Ovary (tissue), 10 donors: ENCODE measurements at regions of chr14 and their contacts with region 1.

Region 1: DNA sequence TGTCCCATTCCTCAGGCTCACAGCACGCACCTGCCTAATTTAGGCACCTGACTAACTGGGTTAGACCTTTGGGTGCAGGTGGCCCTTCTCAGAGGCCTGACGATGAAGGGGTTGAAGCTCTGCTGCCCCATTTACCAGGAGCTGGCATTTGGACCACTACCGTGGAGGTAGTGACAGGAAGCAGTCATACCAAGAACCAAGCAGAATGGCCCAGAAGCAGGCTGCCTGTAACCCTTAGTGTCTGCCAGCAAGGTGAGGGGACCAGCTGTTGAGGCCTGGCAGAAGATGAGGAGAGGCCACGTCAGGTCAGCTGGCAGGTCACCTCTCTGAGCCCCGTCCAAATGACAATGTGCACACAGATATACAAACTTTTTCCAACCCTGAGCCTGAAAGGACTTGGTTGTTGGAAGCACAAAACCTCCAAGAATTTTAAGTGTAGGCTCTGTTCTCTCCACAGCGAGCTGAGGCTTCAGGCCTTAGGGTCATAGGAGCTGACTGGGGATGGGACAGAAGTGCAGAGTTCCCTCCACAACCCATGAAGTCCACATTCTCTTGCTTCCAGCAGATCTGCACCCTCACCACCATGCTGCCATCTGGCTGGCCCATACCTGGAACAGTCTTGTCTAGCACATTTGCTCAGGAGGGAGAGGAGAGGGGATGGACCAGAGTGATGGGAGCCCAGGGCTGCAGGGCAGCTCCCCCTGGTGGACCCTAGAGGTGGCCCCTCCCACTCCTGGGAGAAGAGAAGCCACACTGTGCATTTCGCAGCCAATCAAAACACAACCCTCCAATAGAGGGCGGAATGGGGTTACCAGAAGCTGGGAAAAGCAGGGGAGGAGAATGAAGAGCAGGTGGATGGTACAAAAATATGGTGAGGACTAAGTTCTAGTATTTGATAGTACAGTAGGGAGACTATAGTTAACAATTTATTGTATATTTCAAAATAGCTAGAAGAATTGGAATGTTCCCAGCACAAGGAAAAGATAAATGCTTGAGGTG is 23.3 kb downstream of the VASH1 start:
- DNase-seq: peak; percentile 69 to 85 (median 79)
- H3K4me3 ChIP-seq: no peak overlapping the region
- H3K27ac ChIP-seq: no peak overlapping the region
- H3K4me1 ChIP-seq: peaks cover 8% of the 10 kb centered on the region
- H3K27me3 ChIP-seq: no peaks in the 10 kb centered on the region
- CTCF ChIP-seq: peak; percentile 21 to 79 (median 74)
- EP300 ChIP-seq: no peak
- POLR2A ChIP-seq: no peak

Region 2: DNA sequence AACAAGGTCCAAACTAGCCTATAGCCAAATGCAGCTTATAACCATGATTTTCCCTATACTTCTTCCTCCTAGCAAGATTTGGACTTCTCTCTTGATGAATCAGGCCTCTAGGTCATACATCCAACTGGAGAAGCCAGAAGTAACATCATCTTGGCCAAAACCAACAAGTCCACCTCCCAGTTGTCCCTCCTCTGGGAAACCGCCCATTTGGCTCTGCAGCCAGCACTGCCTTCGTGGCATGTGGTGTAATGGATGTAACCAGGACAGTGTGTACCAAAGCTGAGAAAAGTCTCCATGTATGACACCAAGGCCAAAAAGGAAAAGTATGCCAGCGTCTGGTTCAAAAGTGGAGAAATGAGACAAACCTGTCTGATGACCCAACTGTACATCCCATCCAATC is 82.6 kb before region 1 on chr14:
- intact Hi-C with region 1: loop called in 1 of 4 experiments (anchors 10 kb)
- DNase-seq: no peak
- H3K4me3 ChIP-seq: no peak overlapping the region
- H3K27ac ChIP-seq: no peak overlapping the region
- H3K4me1 ChIP-seq: peaks cover 6% of the 10 kb centered on the region
- H3K27me3 ChIP-seq: no peaks in the 10 kb centered on the region
- CTCF ChIP-seq: no peak
- EP300 ChIP-seq: no peak
- POLR2A ChIP-seq: no peak

Region 3: GRCh38 chr14:76710056-76711010 is 74.2 kb before region 1 on chr14:
- intact Hi-C with region 1: loop called in 3 of 4 experiments (anchors 1 to 10 kb)
- DNase-seq: peak in 1 of 5 donors; percentile 39
- H3K4me3 ChIP-seq: no peak overlapping the region
- H3K27ac ChIP-seq: no peak overlapping the region
- H3K4me1 ChIP-seq: peaks cover 1% of the 10 kb centered on the region
- H3K27me3 ChIP-seq: no peaks in the 10 kb centered on the region
- CTCF ChIP-seq: peak; percentile 31 to 73 (median 72)
- EP300 ChIP-seq: no peak
- POLR2A ChIP-seq: no peak

Region 4: DNA sequence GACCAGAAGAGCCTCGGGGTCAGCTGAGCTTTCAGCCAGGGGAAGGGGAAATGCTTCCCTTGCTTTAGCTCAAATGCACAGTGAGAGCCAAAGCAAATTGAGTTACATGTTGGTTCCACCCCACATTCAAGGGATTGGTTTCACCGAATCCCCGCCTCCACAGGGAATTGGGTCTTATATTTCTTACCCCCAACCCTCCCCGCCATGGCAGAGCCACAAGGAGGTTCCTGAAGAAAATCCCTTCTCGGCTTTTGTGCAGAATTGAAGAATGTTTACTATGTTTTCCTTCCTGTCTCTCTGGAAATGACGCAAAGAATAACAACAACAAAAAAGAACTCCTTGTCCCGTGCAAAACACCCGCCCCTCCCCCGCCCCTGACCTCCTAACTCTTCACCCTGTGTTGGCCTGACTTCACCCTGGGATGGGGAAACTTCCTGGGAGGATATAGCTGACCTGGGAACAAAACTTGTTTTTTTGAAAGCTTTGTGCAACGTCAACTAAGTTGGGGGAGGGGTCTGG is 291.6 kb after region 1 on chr14:
- intact Hi-C with region 1: no loop called
- DNase-seq: peak in 2 of 5 donors; percentile 70 to 86
- H3K4me3 ChIP-seq: peak overlapping the region; percentile 35
- H3K27ac ChIP-seq: peak overlapping the region in 1 of 2 donors; percentile 19
- H3K4me1 ChIP-seq: peaks cover 8% of the 10 kb centered on the region
- H3K27me3 ChIP-seq: no peaks in the 10 kb centered on the region
- CTCF ChIP-seq: no peak
- EP300 ChIP-seq: peak; percentile 86
- POLR2A ChIP-seq: peak; percentile 33